Naive thymus-derived CD8-positive, alpha-beta T cell (primary cell): ENCODE measurements at regions of chr7 and their contacts with region 1.

Region 1: DNA sequence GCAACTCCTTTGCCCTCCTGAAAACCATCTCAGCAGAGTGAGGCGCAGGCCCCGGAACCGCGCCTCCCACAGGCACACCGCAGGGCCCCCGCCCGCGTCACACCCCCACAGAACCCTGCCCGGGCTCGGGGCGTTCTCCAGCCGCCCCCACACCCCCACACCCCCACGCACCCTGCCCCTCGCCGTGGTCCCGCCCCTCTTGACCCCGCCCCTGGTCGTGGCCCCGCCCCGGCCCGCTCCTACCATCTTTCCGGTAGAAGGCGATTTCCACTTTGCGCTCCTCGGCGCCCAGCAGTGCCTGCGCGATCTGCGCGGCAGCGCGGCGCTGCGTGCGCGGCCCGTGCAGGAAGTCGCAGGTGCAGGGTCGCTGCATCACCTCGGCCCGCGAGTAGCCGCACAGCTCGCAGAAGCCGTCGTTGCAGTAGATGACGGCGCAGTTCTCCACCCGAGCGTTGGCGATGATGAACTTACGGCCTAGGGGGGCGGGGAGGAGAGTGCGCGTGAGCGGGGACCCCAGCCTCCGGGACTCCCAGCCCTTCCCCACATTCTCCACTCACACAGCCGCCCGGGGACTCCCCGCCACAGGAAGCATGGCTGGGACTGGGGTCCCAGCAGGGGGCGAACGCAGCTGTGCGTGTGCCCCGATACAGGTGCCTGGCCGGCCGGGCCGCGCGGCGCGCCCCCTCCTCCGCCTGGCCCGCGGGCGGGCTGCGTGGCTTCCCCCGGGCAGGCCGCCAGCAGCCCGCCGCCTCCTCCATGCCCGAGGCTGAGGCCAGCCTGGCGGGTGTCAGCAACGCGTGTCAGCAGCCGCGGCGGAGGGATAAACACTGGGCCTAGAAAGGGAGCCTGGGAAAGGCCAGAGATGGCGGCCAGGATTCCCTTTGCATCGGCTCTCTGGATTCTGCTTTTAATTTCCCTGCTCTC is 3.4 kb downstream of the KCNH2 start:
- DNase-seq: peak; percentile 69 to 90 (median 80)
- ATAC-seq: peak; percentile 75 to 80
- H3K4me3 Mint-ChIP-seq: peak overlapping the region; percentile 80 to 92 (median 87)
- H3K27ac Mint-ChIP-seq: peak overlapping the region; percentile 70 to 98 (median 94)
- H3K4me1 Mint-ChIP-seq: peaks cover 30 to 71% (median 50%) of the 10 kb centered on the region in 4 donors
- H3K27me3 Mint-ChIP-seq: peaks cover 3 to 27% (median 15%) of the 10 kb centered on the region in 5 donors

Region 2: DNA sequence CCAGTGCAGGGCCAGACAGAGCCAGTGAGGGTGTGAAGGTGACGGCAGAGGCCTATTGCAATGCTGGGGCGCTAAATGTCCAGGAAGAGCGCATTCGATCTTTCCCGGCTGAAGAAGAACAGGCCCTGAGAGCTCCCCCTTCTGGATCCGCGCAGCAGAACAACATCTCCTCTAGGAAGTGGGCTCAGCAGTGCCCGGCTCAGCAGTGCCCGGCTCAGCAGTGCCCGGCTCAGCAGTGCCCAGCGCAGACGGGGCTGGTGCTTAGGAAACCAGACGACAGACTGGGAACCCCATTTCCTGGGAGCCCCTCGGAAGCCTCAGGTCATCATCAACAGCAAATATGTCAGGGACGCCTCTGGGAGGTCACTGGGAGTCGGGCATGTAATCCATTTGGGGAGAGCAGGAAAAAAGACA is 11.4 kb after region 1 on chr7:
- POLR2A ChIA-PET with region 1: interaction called, 29 read pairs
- DNase-seq: peak in 8 of 10 donors; percentile 30 to 72 (median 45)
- ATAC-seq: peak; percentile 49 to 59
- H3K4me3 Mint-ChIP-seq: peak overlapping the region in 1 of 10 donors; percentile 39
- H3K27ac Mint-ChIP-seq: peak overlapping the region in 4 of 10 donors; percentile 32 to 86 (median 76)
- H3K4me1 Mint-ChIP-seq: peaks cover 14 to 24% (median 22%) of the 10 kb centered on the region in 4 donors
- H3K27me3 Mint-ChIP-seq: peaks cover 0 to 34% (median 17%) of the 10 kb centered on the region in 5 donors

Region 3: DNA sequence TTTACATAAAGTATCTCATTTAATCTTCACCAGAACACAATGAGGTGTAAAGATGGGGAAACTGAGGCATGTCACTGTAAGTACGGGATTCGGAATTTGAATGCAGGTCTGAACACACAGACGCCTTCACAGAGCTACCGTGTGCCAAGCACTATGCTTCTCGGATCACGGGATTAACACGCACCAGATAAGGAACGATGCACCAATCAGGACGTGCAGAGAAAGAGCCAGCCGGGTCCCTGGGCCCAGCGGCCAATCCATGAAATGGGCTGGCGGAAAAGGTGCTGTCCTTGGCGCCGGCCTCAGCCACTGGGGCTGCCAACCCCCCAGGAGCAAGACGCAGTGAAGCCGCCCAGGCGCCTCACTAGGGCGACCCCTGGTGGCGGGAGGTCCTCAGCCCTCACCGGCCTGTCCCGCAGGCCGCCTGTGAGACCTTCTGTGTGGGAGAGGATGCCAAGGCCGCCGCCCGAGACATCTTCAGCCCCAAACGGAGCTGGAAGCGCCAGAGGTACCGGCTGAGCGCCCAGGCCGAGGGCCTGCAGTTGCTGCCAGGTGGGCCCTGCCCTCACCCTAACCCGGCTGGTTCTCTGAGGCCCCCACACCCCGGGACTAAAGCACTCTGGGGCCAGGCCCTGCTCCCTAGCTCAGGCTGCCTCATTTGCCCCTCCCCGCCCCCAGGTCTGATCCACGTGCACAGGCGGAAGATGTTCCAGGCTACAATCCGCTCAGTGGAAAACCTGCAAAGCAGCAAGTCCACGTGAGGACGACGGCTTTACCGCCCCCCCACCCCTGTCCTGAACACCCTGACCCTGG is 34.0 kb after region 1 on chr7:
- POLR2A ChIA-PET with region 1: interaction called, 14 read pairs
- DNase-seq: peak; percentile 56 to 85 (median 70)
- ATAC-seq: peak; percentile 39 to 49
- H3K4me3 Mint-ChIP-seq: peak overlapping the region; percentile 72 to 89 (median 84)
- H3K27ac Mint-ChIP-seq: peak overlapping the region; percentile 84 to 97 (median 94)
- H3K4me1 Mint-ChIP-seq: peaks cover 26 to 66% (median 62%) of the 10 kb centered on the region in 4 donors
- H3K27me3 Mint-ChIP-seq: peaks cover 0 to 2% (median 0%) of the 10 kb centered on the region in 5 donors